IMR-90 (cell line): ENCODE measurements at regions of chr5 and their contacts with region 1.

Region 1: DNA sequence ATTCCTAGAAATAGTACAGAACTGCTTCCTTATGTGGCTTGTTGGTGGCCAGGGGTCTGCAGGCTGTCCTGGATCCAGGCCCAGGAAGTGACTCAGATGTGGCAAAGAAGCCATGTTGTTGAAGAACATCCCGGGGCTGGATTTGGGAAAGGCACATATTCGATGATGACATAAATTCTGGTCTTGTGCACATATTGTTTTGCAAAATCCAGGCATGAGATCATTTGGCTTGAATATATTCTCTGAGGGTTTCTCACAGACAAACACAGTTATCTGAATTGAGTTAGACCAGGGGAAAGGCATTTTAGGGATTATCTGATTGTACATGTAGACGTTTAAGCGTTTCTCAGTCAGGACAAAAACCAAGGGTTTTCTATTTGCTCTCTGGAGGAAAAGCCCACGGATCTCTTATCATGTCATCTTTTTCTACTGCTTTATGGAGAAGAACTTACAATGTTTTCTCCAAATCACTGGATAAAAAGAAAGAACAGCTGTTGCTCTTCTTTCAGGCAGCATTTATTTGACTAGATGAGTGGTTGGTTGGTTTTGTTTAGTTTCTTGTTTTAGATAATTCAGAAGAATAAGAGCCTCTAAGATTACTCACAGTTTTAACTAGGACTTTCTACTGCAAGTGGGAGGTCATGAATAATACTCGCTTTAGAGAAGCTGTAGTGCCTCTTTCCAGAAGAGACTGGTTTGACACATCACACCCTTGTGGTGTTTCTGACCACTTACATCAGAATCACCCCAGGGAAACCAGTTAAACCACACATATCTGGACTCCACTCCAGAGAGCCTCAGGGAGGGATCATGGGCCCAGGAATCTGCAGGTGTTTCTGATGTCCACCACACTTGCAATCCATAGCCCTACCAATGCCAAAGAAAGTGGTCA is 29.5 kb upstream of the LHFPL2 start:
- DNase-seq: peak; percentile 98
- ATAC-seq: peak; percentile 96
- H3K4me3 ChIP-seq: no peak overlapping the region
- H3K27ac ChIP-seq: peak overlapping the region; percentile 77; the same call in 1 of the 2 replicates
- H3K4me1 ChIP-seq: peaks cover 15% of the 10 kb centered on the region
- H3K27me3 ChIP-seq: no peaks in the 10 kb centered on the region
- CTCF ChIP-seq: peak; percentile 43
- POLR2A ChIP-seq: no peak; the same call in 1 of the 2 replicates
- RAD21 ChIP-seq: peak; percentile 54

Region 2: GRCh38 chr5:78280261-78280660 is 397.8 kb before region 1 on chr5:
- CTCF ChIA-PET with region 1: no interaction called
- POLR2A ChIA-PET with region 1: no interaction called
- dilution Hi-C with region 1: no loop called
- in situ Hi-C with region 1: no loop called
- intact Hi-C with region 1: no loop called
- DNase-seq: no peak
- ATAC-seq: no peak
- H3K4me3 ChIP-seq: no peak overlapping the region
- H3K27ac ChIP-seq: no peak overlapping the region
- H3K4me1 ChIP-seq: no peaks in the 10 kb centered on the region
- H3K27me3 ChIP-seq: no peaks in the 10 kb centered on the region
- CTCF ChIP-seq: no peak
- POLR2A ChIP-seq: no peak
- RAD21 ChIP-seq: no peak

Region 3: DNA sequence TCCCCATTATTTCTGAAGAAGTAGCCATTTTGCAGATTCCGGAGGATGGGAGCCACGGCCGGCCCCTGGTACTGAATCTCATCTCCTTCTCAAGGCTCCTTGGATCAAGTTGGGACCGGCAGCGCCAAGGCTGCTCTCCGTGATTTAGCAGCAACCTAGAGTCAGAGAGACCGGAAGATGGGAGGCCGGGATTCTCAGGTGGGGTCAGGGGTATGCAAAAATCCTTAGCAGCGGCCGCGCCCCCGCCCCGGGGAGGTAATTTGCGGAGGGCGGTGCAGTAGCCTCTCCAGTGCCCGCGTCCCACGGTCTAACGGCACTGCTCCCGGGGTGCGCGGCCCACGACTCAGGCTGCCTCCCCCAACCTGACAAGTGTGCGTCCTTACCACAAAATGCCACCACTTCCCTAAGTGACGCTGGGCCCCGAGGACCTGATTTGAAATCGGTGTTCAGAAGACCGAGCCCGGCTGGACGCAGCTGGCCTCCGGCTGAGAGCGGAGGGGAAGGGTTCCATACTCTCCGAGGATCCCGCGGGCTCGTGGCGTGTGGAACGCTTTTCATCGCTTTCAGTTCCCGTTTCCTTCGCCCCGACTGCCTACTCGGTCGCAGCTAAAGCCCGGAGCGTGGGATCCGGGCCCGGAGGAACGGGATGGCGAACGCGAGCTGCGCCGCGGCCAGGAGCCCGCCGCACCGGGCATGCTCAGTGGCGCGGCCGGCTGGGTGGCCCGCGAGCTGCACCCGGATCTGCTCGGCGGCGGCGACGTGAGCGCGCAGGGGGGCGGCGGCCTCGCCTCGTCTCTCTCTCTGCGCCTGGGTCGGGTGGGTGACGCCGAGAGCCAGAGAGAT is 318.0 kb before region 1 on chr5 and contains the start of gene SCAMP1:
- CTCF ChIA-PET with region 1: no interaction called
- POLR2A ChIA-PET with region 1: no interaction called
- dilution Hi-C with region 1: no loop called
- in situ Hi-C with region 1: no loop called
- intact Hi-C with region 1: loop called (anchors 5 kb)
- DNase-seq: peak; percentile 92
- ATAC-seq: peak; percentile 96
- H3K4me3 ChIP-seq: peak within 1 kb of the TSS; percentile 88
- H3K27ac ChIP-seq: peak within 1 kb of the TSS; percentile 89
- H3K4me1 ChIP-seq: no peaks in the 10 kb centered on the region
- H3K27me3 ChIP-seq: no peaks in the 10 kb centered on the region
- CTCF ChIP-seq: peak; percentile 38
- POLR2A ChIP-seq: peak; percentile 73; the same call in 1 of the 2 replicates
- RAD21 ChIP-seq: peak; percentile 40
- total RNA-seq, gene SCAMP1: 89.4 and 114 TPM in 2 replicates